ENCODE measurements at regions of chrX and their contacts with region 1.

Region 1: GRCh38 chrX:9995855-9996339 is 28.7 kb downstream of the CLDN34 start:
- DNase-seq: peak; percentile 92
- H3K4me3 Mint-ChIP-seq: no peak overlapping the region
- H3K27ac Mint-ChIP-seq: no peak overlapping the region
- H3K4me1 Mint-ChIP-seq: peaks cover 7% of the 10 kb centered on the region
- H3K27me3 Mint-ChIP-seq: peaks cover 2% of the 10 kb centered on the region

Region 2: DNA sequence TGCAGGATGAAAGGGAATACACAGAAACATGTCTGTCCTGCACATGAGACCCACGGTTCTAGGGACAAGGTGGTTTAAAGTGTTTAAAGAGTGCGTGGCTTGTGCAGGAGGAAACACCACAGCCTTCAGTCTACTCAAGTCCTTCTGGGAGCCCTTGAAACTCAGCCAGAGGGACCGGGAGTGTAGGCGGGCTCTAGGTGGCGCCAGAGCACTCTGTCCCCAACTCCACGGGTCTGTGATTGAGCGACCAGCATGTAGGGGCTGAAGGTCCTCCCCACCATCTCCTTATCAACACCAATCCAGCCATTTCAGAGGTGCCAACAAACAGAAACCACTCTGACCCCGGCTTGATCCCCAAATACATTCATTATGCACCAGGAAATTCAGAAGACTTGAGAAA is 110.7 kb before region 1 on chrX:
- intact Hi-C with region 1: loop called (anchors 5 kb)
- DNase-seq: peak; percentile 79
- H3K4me3 Mint-ChIP-seq: no peak overlapping the region
- H3K27ac Mint-ChIP-seq: no peak overlapping the region
- H3K4me1 Mint-ChIP-seq: no peaks in the 10 kb centered on the region
- H3K27me3 Mint-ChIP-seq: peaks cover 12% of the 10 kb centered on the region

Region 3: GRCh38 chrX:9948406-9948805 is 47.5 kb before region 1 on chrX:
- intact Hi-C with region 1: no loop called
- DNase-seq: no peak
- H3K4me3 Mint-ChIP-seq: no peak overlapping the region
- H3K27ac Mint-ChIP-seq: no peak overlapping the region
- H3K4me1 Mint-ChIP-seq: no peaks in the 10 kb centered on the region
- H3K27me3 Mint-ChIP-seq: peaks cover 24% of the 10 kb centered on the region

Region 4: DNA sequence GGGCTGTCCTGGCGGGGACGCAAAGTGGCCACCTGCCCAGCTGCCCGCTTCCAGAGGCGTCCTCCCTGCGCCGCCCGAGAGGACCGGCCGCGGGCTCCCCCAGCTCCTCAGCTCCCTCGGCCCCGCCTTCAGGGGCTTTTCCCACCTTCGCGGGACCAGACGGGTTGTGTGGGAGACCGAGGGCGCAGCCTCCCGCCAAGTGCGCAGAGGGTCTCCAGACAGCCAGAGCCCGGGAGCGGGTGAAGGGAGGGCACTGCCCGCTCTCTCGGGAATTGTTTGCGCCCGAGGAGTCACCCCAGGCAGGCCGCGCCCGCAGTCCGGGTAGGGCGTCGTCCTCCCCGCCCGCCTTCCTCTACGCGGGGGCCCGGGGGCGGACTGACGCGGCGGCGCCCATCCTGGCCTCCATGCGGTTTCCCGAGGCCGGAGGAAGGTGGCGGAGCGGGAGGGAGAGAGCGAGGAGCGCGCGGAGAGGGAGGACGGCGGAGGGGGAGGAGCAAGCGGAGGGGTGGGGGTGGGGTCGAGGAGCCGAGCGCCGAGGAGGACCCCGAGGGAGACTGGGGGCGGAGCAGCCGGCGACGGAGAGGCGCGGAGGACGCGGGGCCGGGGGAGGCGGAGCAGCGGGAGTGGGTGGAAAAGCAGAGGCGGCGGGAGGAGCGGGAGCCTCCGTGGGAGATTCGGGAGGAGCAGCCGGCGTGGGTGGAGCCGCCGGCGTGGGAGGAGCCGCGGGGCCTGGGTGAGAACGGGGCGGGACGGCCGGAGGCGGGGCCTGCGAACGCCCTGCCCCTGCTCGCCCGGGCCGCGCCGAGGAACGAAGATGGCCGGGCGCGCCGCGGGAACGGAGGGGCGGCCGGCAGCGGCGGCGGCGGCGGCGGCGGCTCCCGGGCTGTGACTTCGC is 18.8 kb after region 1 on chrX:
- intact Hi-C with region 1: loop called (anchors 2 kb)
- DNase-seq: peak; percentile 94
- H3K4me3 Mint-ChIP-seq: peak overlapping the region; percentile 74
- H3K27ac Mint-ChIP-seq: peak overlapping the region; percentile 88
- H3K4me1 Mint-ChIP-seq: peaks cover 35% of the 10 kb centered on the region
- H3K27me3 Mint-ChIP-seq: peaks cover 6% of the 10 kb centered on the region